ENCODE measurements at regions of chr4 and their contacts with region 1.

Region 1: DNA sequence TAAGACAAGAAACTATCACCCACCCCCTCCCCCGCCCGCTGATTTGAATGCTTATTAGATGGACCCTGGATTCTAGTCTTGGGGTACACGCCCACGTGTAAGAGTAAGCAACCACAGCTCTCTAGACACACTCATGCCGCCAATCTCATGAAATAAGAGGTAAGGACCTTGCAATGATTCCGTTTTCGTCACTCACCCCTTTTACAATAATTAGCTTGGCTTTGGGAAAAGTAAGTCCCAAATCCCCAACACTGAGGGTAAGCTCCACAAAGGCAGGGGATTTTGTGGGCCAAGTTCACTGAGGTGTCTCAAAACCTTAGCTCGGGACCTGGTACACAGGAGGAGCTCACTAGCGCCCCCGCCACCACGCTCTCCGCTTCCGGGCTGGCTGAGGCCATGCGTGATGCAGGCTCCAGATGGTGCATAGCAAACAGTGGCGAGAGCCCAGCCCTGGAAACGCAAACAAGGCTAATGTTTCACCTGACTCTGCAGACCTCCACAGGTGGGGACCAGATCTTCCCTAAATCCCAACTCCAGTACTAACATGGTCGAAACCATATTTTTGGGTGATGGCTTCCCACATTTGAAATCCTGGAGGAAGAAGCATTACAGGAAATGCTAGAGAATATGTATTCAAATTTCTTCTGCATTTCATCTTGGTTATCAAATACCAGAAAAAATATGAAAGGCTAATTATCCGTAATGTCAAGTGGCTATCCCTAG is 4.1 kb downstream of the PLAC8 start:
- DNase-seq: peak; percentile 81 to 89 (median 87)
- ATAC-seq: peak; percentile 88
- H3K4me3 ChIP-seq: peak overlapping the region; percentile 82
- H3K4me3 Mint-ChIP-seq: peak overlapping the region; percentile 94 to 99 (median 98)
- H3K27ac ChIP-seq: peak overlapping the region; percentile 88
- H3K27ac Mint-ChIP-seq: peak overlapping the region; percentile 92 to 99 (median 98)
- H3K4me1 ChIP-seq: peaks cover 24 to 35% of the 10 kb centered on the region in 2 donors
- H3K4me1 Mint-ChIP-seq: peaks cover 26 to 60% (median 45%) of the 10 kb centered on the region in 7 donors
- H3K27me3 ChIP-seq: no peaks in the 10 kb centered on the region
- H3K27me3 Mint-ChIP-seq: no peaks in the 10 kb centered on the region

Region 2: GRCh38 chr4:82373816-82374625 is 736.4 kb before region 1 on chr4 and contains the start of gene HNRNPD:
- CTCF ChIA-PET with region 1: no interaction called
- POLR2A ChIA-PET with region 1: no interaction called
- intact Hi-C with region 1: loop called in 1 of 2 experiments (anchors 1 kb)
- DNase-seq: peak; percentile 79 to 96 (median 93)
- ATAC-seq: peak; percentile 93
- H3K4me3 ChIP-seq: peak within 1 kb of the TSS; percentile 94
- H3K4me3 Mint-ChIP-seq: peak within 1 kb of the TSS; percentile 91 to 100 (median 97)
- H3K27ac ChIP-seq: peak within 1 kb of the TSS; percentile 98
- H3K27ac Mint-ChIP-seq: peak within 1 kb of the TSS; percentile 95 to 100 (median 99)
- H3K4me1 ChIP-seq: peaks cover 28 to 31% of the 10 kb centered on the region in 2 donors
- H3K4me1 Mint-ChIP-seq: peaks cover 35 to 62% (median 54%) of the 10 kb centered on the region in 7 donors
- H3K27me3 ChIP-seq: no peaks in the 10 kb centered on the region
- H3K27me3 Mint-ChIP-seq: peaks cover 0 to 3% (median 0%) of the 10 kb centered on the region in 5 donors
- total RNA-seq, gene HNRNPD: 200 to 355 (median 238) TPM

Region 3: GRCh38 chr4:82688091-82688795 is 422.1 kb before region 1 on chr4:
- CTCF ChIA-PET with region 1: no interaction called
- POLR2A ChIA-PET with region 1: no interaction called
- intact Hi-C with region 1: no loop called
- DNase-seq: no peak
- ATAC-seq: no peak
- H3K4me3 ChIP-seq: no peak overlapping the region
- H3K4me3 Mint-ChIP-seq: no peak overlapping the region
- H3K27ac ChIP-seq: no peak overlapping the region
- H3K27ac Mint-ChIP-seq: no peak overlapping the region
- H3K4me1 ChIP-seq: no peaks in the 10 kb centered on the region
- H3K4me1 Mint-ChIP-seq: no peaks in the 10 kb centered on the region
- H3K27me3 ChIP-seq: no peaks in the 10 kb centered on the region
- H3K27me3 Mint-ChIP-seq: peaks cover 0 to 23% (median 8%) of the 10 kb centered on the region in 5 donors

Region 4: GRCh38 chr4:82900331-82901128 is 209.9 kb before region 1 on chr4 and contains the start of gene THAP9:
- CTCF ChIA-PET with region 1: no interaction called
- POLR2A ChIA-PET with region 1: interaction called, 4 read pairs
- intact Hi-C with region 1: loop called (anchors 2 kb)
- DNase-seq: peak; percentile 92 to 100 (median 98)
- ATAC-seq: peak; percentile 91
- H3K4me3 ChIP-seq: peak within 1 kb of the TSS; percentile 91
- H3K4me3 Mint-ChIP-seq: no peak within 1 kb of the TSS
- H3K27ac ChIP-seq: peak within 1 kb of the TSS; percentile 98
- H3K27ac Mint-ChIP-seq: no peak within 1 kb of the TSS
- H3K4me1 ChIP-seq: peaks cover 13 to 15% of the 10 kb centered on the region in 2 donors
- H3K4me1 Mint-ChIP-seq: peaks cover 0 to 30% (median 15%) of the 10 kb centered on the region in 7 donors
- H3K27me3 ChIP-seq: no peaks in the 10 kb centered on the region
- H3K27me3 Mint-ChIP-seq: peaks cover 0 to 2% (median 0%) of the 10 kb centered on the region in 5 donors
- total RNA-seq, gene THAP9: 2.2 to 4.9 (median 4.4) TPM

Region 5: GRCh38 chr4:83083925-83084475 is 26.4 kb before region 1 on chr4:
- CTCF ChIA-PET with region 1: interaction called, 15 read pairs
- POLR2A ChIA-PET with region 1: interaction called, 58 read pairs
- intact Hi-C with region 1: loop called (anchors 1 kb)
- DNase-seq: peak; percentile 36 to 86 (median 77)
- ATAC-seq: peak; percentile 98
- H3K4me3 ChIP-seq: no peak overlapping the region
- H3K4me3 Mint-ChIP-seq: peak overlapping the region; percentile 43 to 74 (median 62)
- H3K27ac ChIP-seq: peak overlapping the region; percentile 70
- H3K27ac Mint-ChIP-seq: peak overlapping the region; percentile 88 to 99 (median 94)
- H3K4me1 ChIP-seq: peaks cover 12 to 29% of the 10 kb centered on the region in 2 donors
- H3K4me1 Mint-ChIP-seq: peaks cover 25 to 55% (median 43%) of the 10 kb centered on the region in 7 donors
- H3K27me3 ChIP-seq: no peaks in the 10 kb centered on the region
- H3K27me3 Mint-ChIP-seq: no peaks in the 10 kb centered on the region

Region 6: DNA sequence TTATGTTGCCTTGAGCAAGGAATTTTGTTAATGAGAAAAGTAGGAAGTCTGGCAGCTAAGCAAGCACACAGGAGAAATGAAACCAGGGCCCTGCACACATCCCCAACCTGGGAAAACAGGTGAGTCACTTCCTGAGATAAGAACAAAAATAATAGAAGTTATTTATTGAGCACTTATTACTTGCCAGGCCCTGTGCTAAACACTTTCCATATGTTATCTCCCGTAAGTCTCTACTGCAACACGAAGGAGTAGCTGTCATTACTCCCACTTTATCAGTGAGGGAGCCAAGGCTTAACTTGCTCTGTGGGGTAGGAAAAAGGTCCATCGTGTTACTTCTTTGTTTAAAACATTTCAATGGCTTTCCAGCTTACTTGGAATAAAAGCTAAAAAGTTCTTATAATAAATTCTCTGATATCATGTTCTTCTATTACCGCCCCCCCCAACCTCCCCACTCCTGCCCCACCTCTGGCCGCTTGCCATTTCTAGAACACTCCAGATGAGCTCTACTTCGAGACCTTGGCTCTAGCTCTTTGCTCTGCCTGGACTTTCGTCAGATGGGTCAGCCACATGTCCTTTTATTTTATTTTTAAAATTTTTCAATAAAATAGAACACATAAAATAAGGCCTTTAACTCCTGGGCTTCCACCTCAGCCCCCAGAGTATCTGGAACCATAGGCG is 40.4 kb after region 1 on chr4:
- CTCF ChIA-PET with region 1: interaction called, 5 read pairs
- POLR2A ChIA-PET with region 1: interaction called, 18 read pairs
- intact Hi-C with region 1: loop called in 1 of 2 experiments (anchors 1 kb)
- DNase-seq: no peak
- ATAC-seq: no peak
- H3K4me3 ChIP-seq: no peak overlapping the region
- H3K4me3 Mint-ChIP-seq: no peak overlapping the region
- H3K27ac ChIP-seq: no peak overlapping the region
- H3K27ac Mint-ChIP-seq: no peak overlapping the region
- H3K4me1 ChIP-seq: peaks cover 0 to 10% of the 10 kb centered on the region in 2 donors
- H3K4me1 Mint-ChIP-seq: peaks cover 9 to 44% (median 30%) of the 10 kb centered on the region in 7 donors
- H3K27me3 ChIP-seq: no peaks in the 10 kb centered on the region
- H3K27me3 Mint-ChIP-seq: peaks cover 0 to 17% (median 0%) of the 10 kb centered on the region in 5 donors

Region 7: GRCh38 chr4:83231620-83232076 is 121.3 kb after region 1 on chr4:
- CTCF ChIA-PET with region 1: interaction called, 4 read pairs
- POLR2A ChIA-PET with region 1: interaction called, 7 read pairs
- intact Hi-C with region 1: loop called in 1 of 2 experiments (anchors 1 kb)
- DNase-seq: no peak
- ATAC-seq: peak; percentile 78
- H3K4me3 ChIP-seq: no peak overlapping the region
- H3K4me3 Mint-ChIP-seq: peak overlapping the region in 7 of 10 donors; percentile 13 to 60 (median 45)
- H3K27ac ChIP-seq: no peak overlapping the region
- H3K27ac Mint-ChIP-seq: peak overlapping the region; percentile 50 to 86 (median 72)
- H3K4me1 ChIP-seq: peaks cover 29 to 34% of the 10 kb centered on the region in 2 donors
- H3K4me1 Mint-ChIP-seq: peaks cover 44 to 62% (median 49%) of the 10 kb centered on the region in 7 donors
- H3K27me3 ChIP-seq: no peaks in the 10 kb centered on the region
- H3K27me3 Mint-ChIP-seq: peaks cover 0 to 32% (median 0%) of the 10 kb centered on the region in 5 donors

Region 8: GRCh38 chr4:83455281-83456129 is 345.1 kb after region 1 on chr4 and contains the starts of genes HELQ and MRPS18C:
- CTCF ChIA-PET with region 1: no interaction called
- POLR2A ChIA-PET with region 1: interaction called, 6 read pairs
- intact Hi-C with region 1: loop called (anchors 5 to 10 kb)
- DNase-seq: peak; percentile 77 to 98 (median 97)
- ATAC-seq: peak; percentile 94
- H3K4me3 ChIP-seq: peak within 1 kb of the TSS; percentile 75
- H3K4me3 Mint-ChIP-seq: peak within 1 kb of the TSS; percentile 98 to 100 (median 99)
- H3K27ac ChIP-seq: peak within 1 kb of the TSS; percentile 98
- H3K27ac Mint-ChIP-seq: peak within 1 kb of the TSS; percentile 100
- H3K4me1 ChIP-seq: peaks cover 24 to 33% of the 10 kb centered on the region in 2 donors
- H3K4me1 Mint-ChIP-seq: peaks cover 21 to 75% (median 58%) of the 10 kb centered on the region in 7 donors
- H3K27me3 ChIP-seq: no peaks in the 10 kb centered on the region
- H3K27me3 Mint-ChIP-seq: peaks cover 0 to 3% (median 0%) of the 10 kb centered on the region in 5 donors
- total RNA-seq, gene HELQ: 14.1 to 53.9 (median 40.4) TPM
- total RNA-seq, gene MRPS18C: 18.4 to 56.1 (median 46.7) TPM

Measured in naive thymus-derived CD4-positive, alpha-beta T cell (primary cell).